ENCODE measurements at regions of chr14 and their contacts with region 1.

Region 1: DNA sequence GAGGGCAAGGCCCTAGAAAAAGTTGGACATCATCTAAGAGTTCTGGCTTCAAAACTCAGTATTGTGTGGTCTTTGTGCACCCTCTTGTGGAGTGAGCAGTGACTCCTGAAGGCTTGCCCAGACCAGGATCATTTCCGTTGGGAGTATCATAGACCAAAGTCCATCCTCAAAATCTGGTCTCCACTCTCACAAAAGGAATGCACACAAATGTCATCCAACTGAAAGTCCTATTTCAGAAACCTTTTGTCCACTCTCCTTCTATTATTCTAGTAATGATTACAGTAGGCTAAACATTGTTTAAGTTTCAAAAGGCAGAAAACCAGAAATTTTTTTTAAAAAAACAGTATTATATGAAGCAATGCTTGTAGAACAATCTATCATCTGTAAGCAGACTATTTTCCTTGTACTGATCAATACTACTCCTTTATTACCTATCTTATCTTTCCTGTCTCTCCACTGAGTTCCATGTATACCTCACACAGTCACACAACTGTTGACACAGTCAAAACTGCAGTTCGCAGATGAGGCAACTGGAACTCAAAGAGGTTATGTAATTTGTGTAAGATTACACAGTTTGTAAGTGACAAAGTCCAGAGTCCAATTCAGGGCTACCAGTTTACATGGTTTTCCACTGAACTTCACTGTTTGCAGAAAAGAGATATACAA is 41.4 kb downstream of the COX16 start:
- DNase-seq: peak in 1 of 2 experiments; percentile 23
- H3K4me3 ChIP-seq: no peak overlapping the region
- H3K27ac ChIP-seq: no peak overlapping the region
- H3K4me1 ChIP-seq: no peaks in the 10 kb centered on the region; a peak in 1 of 7 replicates
- H3K27me3 ChIP-seq: no peaks in the 10 kb centered on the region
- CTCF ChIP-seq: peak; percentile 46 to 79 (median 76)
- EP300 ChIP-seq: no peak
- POLR2A ChIP-seq: no peak
- RAD21 ChIP-seq: peak; percentile 95 to 96

Region 2: GRCh38 chr14:70045844-70046535 is 272.1 kb before region 1 on chr14:
- CTCF ChIA-PET with region 1: interaction called, 23 read pairs
- POLR2A ChIA-PET with region 1: no interaction called
- DNase-seq: peak; percentile 63 to 86
- H3K4me3 ChIP-seq: no peak overlapping the region
- H3K27ac ChIP-seq: no peak overlapping the region
- H3K4me1 ChIP-seq: no peaks in the 10 kb centered on the region; a peak in 2 of 7 replicates
- H3K27me3 ChIP-seq: peaks cover 0 to 2% (median under 1%) of the 10 kb centered on the region in 4 experiments; a peak in 2 of 7 replicates
- CTCF ChIP-seq: peak; percentile 93 to 95 (median 93)
- EP300 ChIP-seq: no peak
- POLR2A ChIP-seq: no peak
- RAD21 ChIP-seq: peak; percentile 95 to 97

Region 3: GRCh38 chr14:70086685-70087379 is 231.3 kb before region 1 on chr14:
- CTCF ChIA-PET with region 1: interaction called, 44 read pairs
- POLR2A ChIA-PET with region 1: no interaction called
- DNase-seq: no peak
- H3K4me3 ChIP-seq: no peak overlapping the region
- H3K27ac ChIP-seq: no peak overlapping the region
- H3K4me1 ChIP-seq: no peaks in the 10 kb centered on the region
- H3K27me3 ChIP-seq: no peaks in the 10 kb centered on the region; a peak in 1 of 7 replicates
- CTCF ChIP-seq: peak; percentile 9 to 71 (median 70)
- EP300 ChIP-seq: no peak
- POLR2A ChIP-seq: no peak
- RAD21 ChIP-seq: peak; percentile 76 to 80

Region 4: GRCh38 chr14:70096866-70097265 is 221.2 kb before region 1 on chr14:
- CTCF ChIA-PET with region 1: interaction called, 44 read pairs
- POLR2A ChIA-PET with region 1: no interaction called
- DNase-seq: no peak
- H3K4me3 ChIP-seq: no peak overlapping the region
- H3K27ac ChIP-seq: no peak overlapping the region
- H3K4me1 ChIP-seq: peaks cover 0 to 7% (median under 1%) of the 10 kb centered on the region in 4 experiments; a peak in 2 of 7 replicates
- H3K27me3 ChIP-seq: no peaks in the 10 kb centered on the region
- CTCF ChIP-seq: peak; percentile 64 to 86 (median 74)
- EP300 ChIP-seq: no peak
- POLR2A ChIP-seq: no peak
- RAD21 ChIP-seq: peak; percentile 73 to 86

Region 5: DNA sequence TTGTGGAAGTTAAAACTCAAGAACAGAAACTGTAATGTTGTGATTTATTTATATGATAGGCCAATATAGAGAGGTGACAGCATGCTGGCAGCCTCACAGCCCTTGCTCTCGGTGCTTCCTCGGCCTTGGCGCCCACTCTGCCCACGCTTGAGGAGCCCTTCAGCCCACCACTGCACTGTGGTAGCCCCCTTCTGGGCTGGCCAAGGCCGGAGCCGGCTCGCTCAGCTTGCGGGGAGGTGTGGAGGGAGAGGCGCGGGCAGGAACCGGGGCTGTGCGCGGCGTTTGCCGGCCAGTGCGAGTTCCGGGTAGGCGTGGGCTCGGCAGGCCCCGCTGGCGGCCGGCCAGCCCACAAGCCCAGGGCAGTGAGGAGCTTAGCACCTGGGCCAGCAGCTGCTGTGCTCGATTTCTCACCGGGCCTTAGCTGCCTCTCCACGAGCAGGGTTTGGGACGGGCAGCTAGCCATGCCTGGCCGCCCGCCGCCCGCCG is 63.6 kb before region 1 on chr14:
- CTCF ChIA-PET with region 1: interaction called, 13 read pairs
- POLR2A ChIA-PET with region 1: no interaction called
- DNase-seq: peak in 1 of 2 experiments; percentile 72
- H3K4me3 ChIP-seq: peak overlapping the region; percentile 49 to 66 (median 54)
- H3K27ac ChIP-seq: peak overlapping the region; percentile 29; the same call in 1 of the 2 replicates
- H3K4me1 ChIP-seq: peaks cover 0 to 3% (median 0%) of the 10 kb centered on the region in 4 experiments; a peak in 3 of 7 replicates
- H3K27me3 ChIP-seq: no peaks in the 10 kb centered on the region
- CTCF ChIP-seq: no peak
- EP300 ChIP-seq: no peak
- POLR2A ChIP-seq: no peak
- RAD21 ChIP-seq: no peak

Region 6: GRCh38 chr14:70292716-70293115 is 25.4 kb before region 1 on chr14:
- CTCF ChIA-PET with region 1: interaction called, 11 read pairs
- POLR2A ChIA-PET with region 1: no interaction called
- DNase-seq: no peak
- H3K4me3 ChIP-seq: peak overlapping the region in 1 of 4 experiments; percentile 14; a peak in 1 of 8 replicates
- H3K27ac ChIP-seq: peak overlapping the region; percentile 73; the same call in 1 of the 2 replicates
- H3K4me1 ChIP-seq: peaks cover 4 to 20% (median 11%) of the 10 kb centered on the region in 4 experiments; a peak in 6 of 7 replicates
- H3K27me3 ChIP-seq: no peaks in the 10 kb centered on the region
- CTCF ChIP-seq: no peak
- EP300 ChIP-seq: no peak
- POLR2A ChIP-seq: no peak
- RAD21 ChIP-seq: no peak

Measured in H1 (cell line).